Esophagus muscularis mucosa (tissue), 4 donors: ENCODE measurements at regions of chr2 and their contacts with region 1.

Region 1: DNA sequence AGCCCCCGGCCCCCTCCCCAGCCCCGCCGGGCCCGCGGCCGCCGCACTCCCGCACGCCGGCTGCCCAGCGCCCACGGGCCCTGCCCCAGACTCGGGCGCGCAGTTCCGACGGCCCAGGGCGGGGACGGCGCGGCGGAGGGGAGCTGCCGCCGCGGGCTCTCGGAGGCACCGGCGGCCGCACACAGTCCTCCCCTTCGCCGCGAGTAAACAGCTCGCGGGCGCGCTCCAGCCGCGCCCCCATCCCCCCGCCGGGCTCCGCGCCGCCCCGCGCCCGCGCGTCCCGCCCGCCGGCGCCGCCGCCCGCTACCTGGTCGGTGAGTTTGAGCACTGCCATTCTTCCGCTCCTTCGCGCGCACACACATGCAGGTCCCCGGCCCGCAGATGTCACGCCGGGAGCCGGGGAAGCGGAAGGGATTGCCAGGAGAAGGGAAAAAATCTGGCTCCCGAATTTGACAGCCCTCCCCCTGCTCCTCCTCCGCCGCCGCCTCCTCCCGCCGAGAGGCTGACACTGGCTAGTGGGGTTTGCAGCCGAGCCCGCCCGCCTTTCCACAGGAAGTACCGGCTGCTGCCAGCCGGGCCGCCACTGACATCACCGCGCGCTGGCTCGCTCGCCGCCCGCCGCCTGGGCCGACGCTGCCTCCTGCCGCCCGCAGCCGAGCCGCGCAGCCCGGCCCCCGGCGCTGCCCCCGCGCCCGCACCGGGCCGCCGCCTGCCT is at the start of gene ANKRD44:
- DNase-seq: peak; percentile 95
- H3K4me3 ChIP-seq: peak within 1 kb of the TSS; percentile 84 to 93 (median 88)
- H3K27ac ChIP-seq: peak within 1 kb of the TSS; percentile 83 to 88 (median 85)
- H3K4me1 ChIP-seq: peaks cover 26 to 52% (median 51%) of the 10 kb centered on the region in 4 donors
- H3K27me3 ChIP-seq: no peaks in the 10 kb centered on the region
- CTCF ChIP-seq: peak; percentile 45 to 64 (median 61)
- EP300 ChIP-seq: no peak
- POLR2A ChIP-seq: no peak
- total RNA-seq, gene ANKRD44: 41.4 to 76.6 (median 48.1) TPM

Region 2: GRCh38 chr2:197011799-197012641 is 298.4 kb before region 1 on chr2:
- intact Hi-C with region 1: loop called (anchors 10 kb)
- DNase-seq: no peak
- H3K4me3 ChIP-seq: no peak overlapping the region
- H3K27ac ChIP-seq: no peak overlapping the region
- H3K4me1 ChIP-seq: no peaks in the 10 kb centered on the region
- H3K27me3 ChIP-seq: no peaks in the 10 kb centered on the region
- CTCF ChIP-seq: peak; percentile 70 to 77 (median 74)
- EP300 ChIP-seq: no peak
- POLR2A ChIP-seq: no peak

Region 3: DNA sequence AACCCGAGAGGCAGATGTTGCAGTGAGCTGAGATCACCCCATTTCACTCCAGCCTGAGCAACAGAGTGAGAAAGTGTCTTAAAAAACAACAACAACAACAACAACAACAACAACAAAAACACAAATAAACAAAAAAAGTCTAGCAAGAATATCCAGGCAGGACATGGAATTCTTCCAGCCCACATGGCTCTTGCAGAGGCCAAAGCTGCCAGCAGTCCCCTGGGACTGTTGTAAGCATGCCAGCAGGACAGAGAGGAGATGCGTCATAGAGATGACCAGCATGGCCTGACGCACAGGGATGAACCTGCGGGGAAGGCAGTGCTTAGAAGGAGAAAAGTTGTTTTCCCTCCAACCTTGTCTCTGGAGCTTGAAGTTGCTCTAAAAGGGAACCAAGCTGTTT is 201.7 kb before region 1 on chr2:
- intact Hi-C with region 1: loop called (anchors 2 kb)
- DNase-seq: no peak
- H3K4me3 ChIP-seq: no peak overlapping the region
- H3K27ac ChIP-seq: peak overlapping the region; percentile 57 to 70 (median 63)
- H3K4me1 ChIP-seq: peaks cover 22 to 44% (median 37%) of the 10 kb centered on the region in 4 donors
- H3K27me3 ChIP-seq: no peaks in the 10 kb centered on the region
- CTCF ChIP-seq: no peak
- EP300 ChIP-seq: no peak
- POLR2A ChIP-seq: no peak

Region 4: GRCh38 chr2:197191177-197191939 is 119.1 kb before region 1 on chr2:
- intact Hi-C with region 1: loop called (anchors 2 kb)
- DNase-seq: no peak
- H3K4me3 ChIP-seq: no peak overlapping the region
- H3K27ac ChIP-seq: no peak overlapping the region
- H3K4me1 ChIP-seq: peaks cover 5 to 58% (median 48%) of the 10 kb centered on the region in 4 donors
- H3K27me3 ChIP-seq: no peaks in the 10 kb centered on the region
- CTCF ChIP-seq: peak; percentile 64 to 70 (median 66)
- EP300 ChIP-seq: no peak
- POLR2A ChIP-seq: no peak

Region 5: GRCh38 chr2:197209742-197210408 is 100.6 kb before region 1 on chr2:
- intact Hi-C with region 1: no loop called
- DNase-seq: peak; percentile 39
- H3K4me3 ChIP-seq: no peak overlapping the region
- H3K27ac ChIP-seq: peak overlapping the region in 3 of 4 donors; percentile 17 to 25 (median 24)
- H3K4me1 ChIP-seq: peaks cover 4 to 82% (median 67%) of the 10 kb centered on the region in 4 donors
- H3K27me3 ChIP-seq: no peaks in the 10 kb centered on the region
- CTCF ChIP-seq: no peak
- EP300 ChIP-seq: no peak
- POLR2A ChIP-seq: no peak

Region 6: DNA sequence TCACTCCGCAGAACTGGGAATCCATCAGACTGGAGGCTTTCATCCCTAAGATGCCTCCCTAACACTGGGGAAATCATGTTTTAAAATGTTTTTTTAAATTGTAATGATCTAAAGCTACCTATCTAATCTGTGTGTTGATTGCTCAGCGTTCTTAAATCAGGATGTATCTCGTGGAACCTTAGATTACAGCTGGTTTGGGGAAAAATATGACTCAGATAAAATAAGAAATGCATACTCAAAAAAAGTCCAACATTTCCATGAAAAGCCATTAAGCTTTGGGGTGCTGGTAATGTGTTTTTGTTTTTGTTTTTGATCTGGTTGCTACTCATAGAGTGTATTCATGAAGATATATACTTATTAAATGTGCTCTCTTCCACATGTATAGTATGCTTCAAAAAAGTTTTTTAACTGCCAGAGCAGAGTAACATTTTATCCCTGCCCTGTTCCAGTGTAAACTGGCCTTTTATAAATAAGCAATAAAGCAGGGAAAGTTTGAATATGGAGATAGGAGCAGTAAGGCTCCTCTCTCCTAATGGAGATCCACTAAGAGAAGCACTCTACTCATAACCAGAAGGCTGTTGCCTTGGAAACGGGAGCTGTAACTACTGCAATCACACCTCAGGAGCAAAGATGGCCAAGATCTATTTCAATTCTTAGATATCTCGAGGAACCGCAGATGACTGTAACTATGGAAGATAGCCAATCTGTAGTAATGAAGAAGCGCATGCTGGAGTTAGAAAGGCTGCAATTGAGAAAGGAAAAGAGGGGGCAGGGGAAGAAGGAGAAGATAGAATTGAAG is 41.4 kb before region 1 on chr2:
- intact Hi-C with region 1: no loop called
- DNase-seq: peak; percentile 31
- H3K4me3 ChIP-seq: no peak overlapping the region
- H3K27ac ChIP-seq: no peak overlapping the region
- H3K4me1 ChIP-seq: peaks cover 4 to 62% (median 51%) of the 10 kb centered on the region in 4 donors
- H3K27me3 ChIP-seq: no peaks in the 10 kb centered on the region
- CTCF ChIP-seq: no peak
- EP300 ChIP-seq: no peak
- POLR2A ChIP-seq: no peak

Region 7: GRCh38 chr2:197838036-197838435 is 527.6 kb after region 1 on chr2:
- intact Hi-C with region 1: no loop called
- DNase-seq: no peak
- H3K4me3 ChIP-seq: peak overlapping the region; percentile 29 to 37 (median 35)
- H3K27ac ChIP-seq: peak overlapping the region; percentile 56 to 67 (median 60)
- H3K4me1 ChIP-seq: peaks cover 16 to 42% (median 32%) of the 10 kb centered on the region in 4 donors
- H3K27me3 ChIP-seq: no peaks in the 10 kb centered on the region
- CTCF ChIP-seq: no peak
- EP300 ChIP-seq: no peak
- POLR2A ChIP-seq: no peak